IMR-90 (cell line): ENCODE measurements at regions of chr12 and their contacts with region 1.

Region 1: DNA sequence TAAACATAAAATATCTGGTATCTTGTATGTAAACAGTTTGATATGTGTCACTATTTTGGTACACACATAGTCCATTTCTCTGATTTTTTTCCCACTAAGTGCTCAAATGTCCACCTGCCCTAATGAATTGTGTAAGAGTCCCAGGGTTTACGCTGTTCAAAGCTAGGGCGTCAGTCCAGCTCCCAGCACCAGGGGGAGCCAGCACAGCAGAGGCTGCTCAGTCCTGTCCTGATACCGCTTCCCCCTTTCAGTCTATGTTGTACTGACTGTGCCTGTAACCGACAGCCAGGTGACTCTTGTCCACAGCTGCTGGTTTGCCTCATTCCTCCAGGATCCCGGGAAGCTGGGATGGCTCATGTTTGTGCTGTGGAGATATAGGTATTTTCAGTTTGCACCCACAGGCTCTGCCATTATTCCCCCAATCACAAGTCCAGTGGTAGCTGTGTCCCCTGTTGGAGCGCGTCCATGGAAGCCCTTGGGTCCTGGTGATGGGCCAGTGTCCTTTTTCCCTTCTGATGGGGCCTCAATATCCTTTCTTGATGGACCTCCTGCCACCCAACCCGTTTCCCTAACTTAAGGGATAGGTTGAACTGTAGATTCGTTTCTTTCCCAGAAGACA is 242.0 kb downstream of the NEDD1 start:
- DNase-seq: peak; percentile 4
- ATAC-seq: no peak
- H3K4me3 ChIP-seq: no peak overlapping the region
- H3K27ac ChIP-seq: no peak overlapping the region
- H3K4me1 ChIP-seq: no peaks in the 10 kb centered on the region
- H3K27me3 ChIP-seq: no peaks in the 10 kb centered on the region
- CTCF ChIP-seq: peak; percentile 49
- POLR2A ChIP-seq: no peak
- RAD21 ChIP-seq: peak; percentile 39

Region 2: DNA sequence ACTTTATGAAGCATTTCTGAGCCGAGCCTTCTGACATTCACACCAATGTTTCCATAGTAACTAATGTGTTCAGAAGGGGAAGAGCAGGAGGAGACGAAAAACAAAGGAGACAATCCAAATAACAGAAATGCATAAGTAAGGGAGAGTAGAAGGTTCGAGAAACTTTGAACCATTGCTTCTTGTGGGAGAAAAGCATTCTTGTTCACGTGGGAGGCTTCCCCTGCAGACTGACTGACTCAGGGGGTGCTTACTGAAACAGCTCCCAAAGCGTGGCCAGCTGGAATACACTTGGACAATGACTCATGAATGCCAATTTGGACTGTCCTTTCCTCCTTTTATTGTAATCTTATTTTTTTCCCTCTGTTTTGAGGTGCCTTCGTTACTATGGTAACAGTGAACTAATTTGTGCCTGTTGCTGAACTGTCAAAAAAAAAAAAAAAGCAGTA is 168.0 kb before region 1 on chr12:
- CTCF ChIA-PET with region 1: no interaction called
- POLR2A ChIA-PET with region 1: no interaction called
- dilution Hi-C with region 1: no loop called
- in situ Hi-C with region 1: no loop called
- intact Hi-C with region 1: no loop called
- DNase-seq: peak; percentile 90
- ATAC-seq: peak; percentile 85
- H3K4me3 ChIP-seq: no peak overlapping the region
- H3K27ac ChIP-seq: no peak overlapping the region
- H3K4me1 ChIP-seq: no peaks in the 10 kb centered on the region
- H3K27me3 ChIP-seq: peaks cover 8% of the 10 kb centered on the region; the same call in 1 of the 2 replicates
- CTCF ChIP-seq: no peak
- POLR2A ChIP-seq: no peak
- RAD21 ChIP-seq: no peak

Region 3: GRCh38 chr12:97131220-97131981 is 17.6 kb before region 1 on chr12:
- CTCF ChIA-PET with region 1: no interaction called
- POLR2A ChIA-PET with region 1: no interaction called
- dilution Hi-C with region 1: no loop called
- in situ Hi-C with region 1: no loop called
- intact Hi-C with region 1: no loop called
- DNase-seq: no peak
- ATAC-seq: no peak
- H3K4me3 ChIP-seq: no peak overlapping the region
- H3K27ac ChIP-seq: no peak overlapping the region
- H3K4me1 ChIP-seq: no peaks in the 10 kb centered on the region
- H3K27me3 ChIP-seq: no peaks in the 10 kb centered on the region
- CTCF ChIP-seq: no peak
- POLR2A ChIP-seq: no peak
- RAD21 ChIP-seq: no peak

Region 4: GRCh38 chr12:97167598-97167997 is 18.5 kb after region 1 on chr12:
- CTCF ChIA-PET with region 1: no interaction called
- POLR2A ChIA-PET with region 1: no interaction called
- dilution Hi-C with region 1: no loop called
- in situ Hi-C with region 1: no loop called
- intact Hi-C with region 1: loop called (anchors 1 kb)
- DNase-seq: no peak
- ATAC-seq: no peak
- H3K4me3 ChIP-seq: no peak overlapping the region
- H3K27ac ChIP-seq: no peak overlapping the region
- H3K4me1 ChIP-seq: no peaks in the 10 kb centered on the region
- H3K27me3 ChIP-seq: no peaks in the 10 kb centered on the region
- CTCF ChIP-seq: no peak
- POLR2A ChIP-seq: no peak
- RAD21 ChIP-seq: no peak